Ascending aorta (tissue), 2 donors: ENCODE measurements at regions of chr5 and their contacts with region 1.

Region 1: GRCh38 chr5:159133041-159133741 is 33.5 kb upstream of the EBF1 start:
- DNase-seq: peak in 1 of 2 donors; percentile 74
- H3K4me3 ChIP-seq: peak overlapping the region; percentile 29 to 34
- H3K27ac ChIP-seq: peak overlapping the region; percentile 65 to 80
- H3K4me1 ChIP-seq: no peaks in the 10 kb centered on the region
- H3K27me3 ChIP-seq: no peaks in the 10 kb centered on the region
- CTCF ChIP-seq: peak; percentile 66 to 90 (median 72)

Region 2: DNA sequence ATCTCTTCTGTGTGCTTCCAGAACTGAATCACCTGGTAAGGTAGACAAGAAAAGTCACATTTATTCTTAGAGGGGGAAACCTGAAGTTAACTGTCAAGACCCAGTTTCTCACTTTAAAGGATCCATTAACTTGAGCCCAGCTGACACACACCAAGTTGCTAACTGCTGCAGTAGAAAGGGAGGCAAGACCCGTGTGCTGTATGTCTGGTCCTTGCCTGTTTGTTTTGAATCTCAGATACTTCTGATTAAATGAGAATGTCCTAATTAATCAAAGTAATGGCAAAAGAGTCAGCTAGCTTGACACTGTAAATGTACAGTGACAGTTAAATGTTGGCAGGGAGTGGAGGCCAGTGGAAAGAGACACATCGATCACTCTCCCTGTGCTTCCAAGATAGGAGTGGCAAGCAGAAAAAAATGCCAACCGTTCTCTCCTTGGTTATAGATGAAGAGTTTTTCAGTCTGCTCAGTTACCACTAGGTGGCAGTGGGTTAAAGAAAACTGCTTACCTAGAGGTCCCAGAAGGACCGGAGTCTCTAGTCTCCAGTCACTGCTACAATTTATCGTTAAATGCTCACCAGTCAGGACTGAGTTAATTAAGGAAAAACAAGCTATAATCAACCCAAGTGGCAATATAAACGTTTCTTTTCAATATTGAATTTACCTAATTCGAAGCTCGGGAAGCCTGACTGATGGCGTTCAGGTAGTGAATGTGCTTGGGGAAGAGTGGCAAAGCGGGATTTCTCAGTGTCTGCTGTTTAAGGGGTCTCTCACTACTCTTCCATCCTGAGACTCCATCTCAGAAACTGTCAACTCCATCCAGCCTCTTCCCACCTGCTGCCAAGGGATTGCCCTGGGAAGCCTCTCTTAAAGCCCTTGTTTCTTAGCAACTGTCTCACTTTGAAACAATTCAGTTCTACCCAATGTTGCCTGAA is 1371.2 kb before region 1 on chr5:
- intact Hi-C with region 1: loop called (anchors 5 kb)
- DNase-seq: no peak
- H3K4me3 ChIP-seq: no peak overlapping the region
- H3K27ac ChIP-seq: no peak overlapping the region
- H3K4me1 ChIP-seq: no peaks in the 10 kb centered on the region
- H3K27me3 ChIP-seq: no peaks in the 10 kb centered on the region
- CTCF ChIP-seq: peak; percentile 49 to 81 (median 75)

Region 3: GRCh38 chr5:157820593-157821252 is 1312.5 kb before region 1 on chr5:
- intact Hi-C with region 1: loop called (anchors 5 kb)
- DNase-seq: no peak
- H3K4me3 ChIP-seq: no peak overlapping the region
- H3K27ac ChIP-seq: peak overlapping the region; percentile 31 to 41
- H3K4me1 ChIP-seq: peaks cover 0 to 13% of the 10 kb centered on the region in 2 donors
- H3K27me3 ChIP-seq: no peaks in the 10 kb centered on the region
- CTCF ChIP-seq: peak in 2 of 3 experiments; percentile 45 to 60

Region 4: DNA sequence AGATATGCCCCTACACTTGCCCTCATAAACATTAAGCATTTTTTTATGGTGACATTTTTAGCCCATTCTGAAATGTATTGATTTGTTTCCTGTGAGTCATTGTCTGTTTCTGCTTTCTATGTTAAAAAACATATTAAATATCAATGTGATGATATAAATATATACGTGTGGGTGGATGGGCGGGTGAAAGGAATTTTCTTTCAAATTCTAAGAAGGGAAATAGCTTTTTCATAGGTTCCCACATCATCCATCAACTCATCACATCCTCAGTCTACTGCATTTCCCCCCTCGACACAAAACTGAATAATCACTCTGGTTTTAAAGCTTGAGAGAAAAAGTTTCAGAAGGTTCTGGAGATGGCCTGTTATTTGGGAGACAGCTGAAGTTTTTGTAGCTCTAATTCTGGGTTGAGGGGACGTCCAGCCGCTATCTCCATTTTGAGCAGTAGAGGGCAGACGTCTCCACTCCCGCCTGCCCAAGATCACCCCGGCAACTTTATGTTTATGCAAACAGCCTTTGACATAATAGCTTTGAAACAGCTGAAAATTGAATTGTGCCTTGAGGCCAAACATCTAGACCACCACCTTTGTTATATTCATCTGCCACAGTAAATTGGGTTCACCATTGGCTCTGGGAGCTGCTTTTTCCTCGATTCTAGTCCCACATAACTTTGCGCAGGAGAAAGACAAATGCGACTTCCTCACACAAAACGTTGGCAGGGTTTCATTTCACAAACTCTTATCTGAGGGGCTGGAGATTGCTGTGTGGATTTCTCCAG is 1058.0 kb before region 1 on chr5:
- intact Hi-C with region 1: loop called (anchors 5 kb)
- DNase-seq: peak in 1 of 2 donors; percentile 71
- H3K4me3 ChIP-seq: peak overlapping the region; percentile 37 to 41
- H3K27ac ChIP-seq: no peak overlapping the region
- H3K4me1 ChIP-seq: no peaks in the 10 kb centered on the region
- H3K27me3 ChIP-seq: no peaks in the 10 kb centered on the region
- CTCF ChIP-seq: peak; percentile 61 to 84 (median 79)

Region 5: GRCh38 chr5:158174918-158175851 is 958.0 kb before region 1 on chr5:
- intact Hi-C with region 1: loop called (anchors 1 kb)
- DNase-seq: peak in 1 of 2 donors; percentile 80
- H3K4me3 ChIP-seq: no peak overlapping the region
- H3K27ac ChIP-seq: no peak overlapping the region
- H3K4me1 ChIP-seq: peaks cover 0 to 11% of the 10 kb centered on the region in 2 donors
- H3K27me3 ChIP-seq: no peaks in the 10 kb centered on the region
- CTCF ChIP-seq: peak; percentile 74 to 85 (median 77)

Region 6: DNA sequence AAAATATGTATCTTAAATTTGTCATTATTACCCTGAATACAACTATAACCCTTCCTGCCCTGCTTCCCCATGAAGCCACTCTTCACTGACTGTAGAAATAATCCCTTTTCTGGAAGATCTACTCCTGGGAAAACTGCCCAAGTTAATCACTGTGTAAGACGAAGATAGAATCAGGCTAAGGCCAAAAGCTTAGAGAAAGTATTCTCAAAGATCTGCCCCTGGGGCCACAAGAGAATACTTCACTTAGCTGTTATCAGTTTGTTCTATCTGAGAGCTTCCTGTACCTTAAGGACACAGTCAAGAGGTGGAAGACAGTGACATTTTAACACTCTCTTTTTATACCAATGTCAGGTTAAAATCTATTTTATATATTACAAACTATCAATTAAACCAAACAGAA is 42.4 kb after region 1 on chr5:
- intact Hi-C with region 1: no loop called
- DNase-seq: no peak
- H3K4me3 ChIP-seq: no peak overlapping the region
- H3K27ac ChIP-seq: no peak overlapping the region
- H3K4me1 ChIP-seq: peaks cover 0 to 15% of the 10 kb centered on the region in 2 donors
- H3K27me3 ChIP-seq: no peaks in the 10 kb centered on the region
- CTCF ChIP-seq: no peak